ENCODE measurements at regions of chr9 and their contacts with region 1.

Region 1: DNA sequence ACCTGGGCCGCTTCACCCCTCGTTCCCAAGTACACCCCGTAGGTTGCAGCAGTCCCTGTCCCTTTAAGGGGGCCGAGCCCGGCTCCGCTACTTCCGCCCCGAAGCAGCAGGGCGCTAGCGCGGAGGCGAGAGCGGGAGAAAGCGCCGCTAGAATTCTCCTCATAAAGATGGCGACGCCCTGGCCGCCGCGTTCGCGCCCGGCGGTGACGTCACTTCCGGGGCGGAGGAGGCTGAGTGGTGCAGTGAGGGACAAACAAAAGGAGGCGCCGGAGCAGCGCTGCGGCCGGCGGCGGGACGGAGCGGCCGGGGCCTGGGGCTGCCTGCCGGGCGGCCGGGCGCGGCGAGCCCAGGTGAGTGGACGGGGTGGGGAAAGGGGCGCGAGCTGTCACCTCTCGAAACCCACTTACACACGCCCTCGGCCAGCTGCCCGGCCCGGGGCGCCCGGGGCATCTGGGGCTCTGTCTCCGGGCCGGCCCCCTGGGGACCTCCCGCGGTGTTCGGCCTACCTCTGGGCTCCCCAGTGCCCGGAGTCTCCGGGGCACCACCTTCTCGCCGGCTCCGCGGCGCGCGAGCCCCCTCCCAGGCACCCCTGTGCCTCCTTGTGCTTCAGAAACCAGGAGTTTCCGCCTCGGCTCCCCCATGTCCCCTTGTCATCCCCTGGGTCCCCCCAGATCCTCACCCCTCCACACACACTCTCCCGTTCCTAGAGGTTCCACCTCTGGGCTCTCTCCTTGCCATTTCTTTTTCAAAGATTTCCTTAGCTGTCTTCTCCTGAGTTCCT is at the starts of genes KYAT1 and LRRC8A:
- DNase-seq: peak; percentile 98 to 99 (median 98)
- ATAC-seq: peak; percentile 87 to 94 (median 90)
- H3K4me3 ChIP-seq: peak within 1 kb of the TSS; percentile 80 to 100 (median 98)
- H3K27ac ChIP-seq: peak within 1 kb of the TSS; percentile 93 to 100 (median 99)
- H3K4me1 ChIP-seq: peaks cover 8 to 82% (median 49%) of the 10 kb centered on the region in 12 donors
- H3K27me3 ChIP-seq: no peaks in the 10 kb centered on the region
- CTCF ChIP-seq: peak in 2 of 12 donors; percentile 14 to 29
- POLR2A ChIP-seq: peak in 1 of 2 donors; percentile 88
- total RNA-seq, gene KYAT1: 9.5 to 16.7 (median 13.4) TPM
- total RNA-seq, gene LRRC8A: 16.2 to 76.4 (median 28.8) TPM

Region 2: DNA sequence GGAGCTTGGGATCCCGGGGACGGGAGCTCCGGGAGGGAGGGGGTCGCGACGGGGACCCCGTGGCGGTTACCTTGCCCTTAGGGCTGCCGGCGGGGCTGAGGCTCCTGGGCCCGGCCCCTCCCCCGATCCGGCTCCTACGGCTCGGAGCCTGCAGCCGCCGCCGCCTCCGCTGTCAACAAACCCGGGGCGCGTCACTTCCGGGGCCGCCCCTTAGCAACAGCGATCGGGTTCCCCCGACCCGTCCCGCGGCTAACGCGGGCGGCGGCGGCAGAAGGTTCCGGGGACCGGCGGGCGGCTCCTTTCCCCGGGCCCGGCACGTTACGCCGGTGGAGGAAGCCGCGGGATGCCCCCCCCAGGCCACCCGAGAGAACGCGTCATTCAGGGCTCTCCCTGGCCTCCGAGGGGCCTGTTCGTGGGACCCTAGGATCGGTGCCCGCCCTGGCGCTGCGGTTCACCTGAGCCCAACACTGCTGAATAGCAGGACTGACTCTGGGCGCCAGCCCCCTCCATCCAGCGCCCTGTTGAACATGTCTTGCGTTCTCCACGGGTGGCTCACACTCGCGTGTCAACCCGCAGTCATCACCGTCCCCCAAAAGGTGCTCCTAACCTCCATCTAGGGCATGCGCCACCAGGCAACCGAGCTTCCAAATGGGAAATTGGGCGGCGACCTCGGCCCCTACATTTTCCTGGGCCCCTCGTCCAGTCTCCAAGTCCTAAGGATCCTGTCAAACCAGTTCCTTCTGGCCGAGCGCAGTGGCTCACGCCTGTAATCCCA is 110.2 kb before region 1 on chr9 and contains the start of gene ZER1:
- intact Hi-C with region 1: no loop called
- DNase-seq: peak; percentile 94 to 97 (median 95)
- ATAC-seq: peak; percentile 93 to 98 (median 98)
- H3K4me3 ChIP-seq: peak within 1 kb of the TSS; percentile 70 to 100 (median 86)
- H3K27ac ChIP-seq: peak within 1 kb of the TSS; percentile 81 to 98 (median 92)
- H3K4me1 ChIP-seq: peaks cover 0 to 33% (median 21%) of the 10 kb centered on the region in 12 donors
- H3K27me3 ChIP-seq: no peaks in the 10 kb centered on the region
- CTCF ChIP-seq: peak in 1 of 12 donors; percentile 3
- POLR2A ChIP-seq: peak in 1 of 2 donors; percentile 80
- total RNA-seq, gene ZER1: 53.4 to 163 (median 62.3) TPM

Region 3: GRCh38 chr9:128818099-128818838 is 63.8 kb before region 1 on chr9 and contains the start of gene ENDOG:
- intact Hi-C with region 1: loop called in 1 of 10 experiments (anchors 5 kb)
- DNase-seq: peak; percentile 97 to 99 (median 98)
- ATAC-seq: peak; percentile 93 to 97 (median 94)
- H3K4me3 ChIP-seq: peak within 1 kb of the TSS; percentile 53 to 82 (median 74)
- H3K27ac ChIP-seq: peak within 1 kb of the TSS; percentile 74 to 95 (median 91)
- H3K4me1 ChIP-seq: peaks cover 0 to 20% (median 15%) of the 10 kb centered on the region in 12 donors
- H3K27me3 ChIP-seq: no peaks in the 10 kb centered on the region
- CTCF ChIP-seq: peak; percentile 91 to 100 (median 97)
- POLR2A ChIP-seq: peak; percentile 66 to 97
- total RNA-seq, gene ENDOG: 34.8 to 99.9 (median 57.6) TPM

Region 4: GRCh38 chr9:128835246-128836210 is 46.6 kb before region 1 on chr9:
- intact Hi-C with region 1: no loop called
- DNase-seq: no peak
- ATAC-seq: no peak
- H3K4me3 ChIP-seq: no peak overlapping the region
- H3K27ac ChIP-seq: no peak overlapping the region
- H3K4me1 ChIP-seq: no peaks in the 10 kb centered on the region
- H3K27me3 ChIP-seq: no peaks in the 10 kb centered on the region
- CTCF ChIP-seq: no peak
- POLR2A ChIP-seq: no peak

Region 5: GRCh38 chr9:128921881-128922763 is 40.0 kb after region 1 on chr9:
- intact Hi-C with region 1: loop called in 9 of 10 experiments (anchors 2 to 5 kb)
- DNase-seq: peak; percentile 59 to 79 (median 65)
- ATAC-seq: peak; percentile 25 to 73 (median 64)
- H3K4me3 ChIP-seq: peak overlapping the region; percentile 13 to 72 (median 62)
- H3K27ac ChIP-seq: peak overlapping the region; percentile 62 to 91 (median 86)
- H3K4me1 ChIP-seq: peaks cover 6 to 52% (median 35%) of the 10 kb centered on the region in 12 donors
- H3K27me3 ChIP-seq: no peaks in the 10 kb centered on the region
- CTCF ChIP-seq: peak in 3 of 12 donors; percentile 9 to 20 (median 17)
- POLR2A ChIP-seq: no peak

Region 6: DNA sequence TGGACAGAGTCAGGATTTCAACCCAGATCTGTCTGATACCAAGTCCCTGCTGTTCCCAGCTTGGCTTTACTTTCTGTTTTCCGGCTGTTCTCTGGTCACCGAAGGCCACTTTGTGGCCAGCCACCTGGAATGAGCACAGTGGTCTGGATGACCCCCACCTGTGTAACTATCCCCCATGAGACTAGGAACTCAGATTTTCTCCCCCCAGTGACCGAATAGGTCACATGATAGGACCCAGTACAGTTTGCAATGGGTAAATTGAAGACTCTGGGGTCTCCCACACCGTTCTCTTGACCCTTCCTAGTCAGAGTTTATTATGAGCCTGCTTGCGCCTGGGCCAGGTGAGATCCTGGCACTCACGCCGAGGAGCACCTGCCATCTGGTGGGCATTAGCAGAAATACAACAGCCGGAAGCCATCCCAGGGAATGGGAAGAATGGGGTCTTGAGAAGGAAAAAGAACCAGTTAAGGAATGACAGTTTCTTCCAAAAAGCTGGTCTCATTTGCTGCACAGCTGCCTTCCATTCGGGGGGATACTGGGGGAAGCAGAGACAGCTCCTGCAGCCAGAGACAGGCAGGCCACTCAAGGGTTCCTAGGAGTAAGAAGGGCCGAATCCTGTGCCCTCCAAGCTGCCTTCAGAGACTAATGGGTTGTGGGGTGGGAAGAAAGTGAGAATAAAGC is 45.8 kb after region 1 on chr9:
- intact Hi-C with region 1: loop called in 6 of 10 experiments (anchors 2 to 5 kb)
- DNase-seq: peak in 1 of 5 donors; percentile 60
- ATAC-seq: peak in 3 of 4 donors; percentile 72 to 82 (median 75)
- H3K4me3 ChIP-seq: no peak overlapping the region
- H3K27ac ChIP-seq: no peak overlapping the region
- H3K4me1 ChIP-seq: peaks cover 0 to 14% (median 1%) of the 10 kb centered on the region in 12 donors
- H3K27me3 ChIP-seq: no peaks in the 10 kb centered on the region
- CTCF ChIP-seq: peak; percentile 81 to 93 (median 86)
- POLR2A ChIP-seq: no peak